B cell (primary cell): ENCODE measurements at regions of chr2 and their contacts with region 1.

Region 1: DNA sequence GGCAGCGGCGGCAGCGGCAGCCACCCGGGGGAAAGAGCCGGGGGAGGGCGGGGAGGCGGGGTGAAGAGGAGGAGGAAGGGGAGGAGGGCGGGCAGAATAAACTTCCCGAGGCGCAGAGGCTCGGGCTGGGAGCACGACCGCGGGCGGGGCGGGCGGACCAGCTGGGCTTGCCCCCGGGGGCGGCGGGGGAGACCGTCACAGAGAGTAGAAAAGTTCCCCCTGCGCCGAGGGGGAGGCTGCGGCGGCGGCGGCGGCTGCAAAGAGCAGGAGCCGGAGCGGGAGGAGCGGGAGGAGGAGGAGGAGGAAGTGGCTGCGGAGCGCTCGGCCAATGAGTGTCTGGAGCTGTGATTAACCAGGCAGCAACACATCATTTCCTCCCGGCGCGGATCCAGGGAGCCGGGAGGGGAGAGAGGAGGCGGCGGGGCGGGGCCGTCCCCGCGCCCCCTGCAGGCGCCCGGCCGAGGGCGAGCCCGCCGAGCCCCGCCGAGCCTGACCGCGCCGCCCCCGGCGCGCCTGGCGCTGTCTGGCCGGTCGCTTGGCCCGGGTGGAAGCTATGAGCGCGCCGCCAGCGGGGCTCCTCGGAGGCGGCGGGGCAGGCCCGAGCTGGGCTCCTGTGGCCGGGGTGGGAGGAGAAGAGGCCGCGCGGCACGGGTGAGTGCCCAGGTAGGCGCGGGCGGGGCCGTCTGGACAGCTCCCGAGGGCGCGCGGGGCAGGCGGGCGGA is at the start of gene ACVR1:
- DNase-seq: peak; percentile 85
- ATAC-seq: peak; percentile 77
- H3K4me3 ChIP-seq: peak within 1 kb of the TSS; percentile 56 to 81 (median 75)
- H3K4me3 Mint-ChIP-seq: peak within 1 kb of the TSS; percentile 95
- H3K27ac ChIP-seq: peak within 1 kb of the TSS; percentile 30 to 68
- H3K27ac Mint-ChIP-seq: peak within 1 kb of the TSS; percentile 91
- H3K4me1 ChIP-seq: peaks cover 14 to 20% of the 10 kb centered on the region in 2 donors
- H3K4me1 Mint-ChIP-seq: peaks cover 24% of the 10 kb centered on the region
- H3K27me3 ChIP-seq: no peaks in the 10 kb centered on the region
- H3K27me3 Mint-ChIP-seq: no peaks in the 10 kb centered on the region
- CTCF ChIP-seq: peak; percentile 45
- total RNA-seq, gene ACVR1: 11.3 and 11.7 TPM in 2 replicates

Region 2: DNA sequence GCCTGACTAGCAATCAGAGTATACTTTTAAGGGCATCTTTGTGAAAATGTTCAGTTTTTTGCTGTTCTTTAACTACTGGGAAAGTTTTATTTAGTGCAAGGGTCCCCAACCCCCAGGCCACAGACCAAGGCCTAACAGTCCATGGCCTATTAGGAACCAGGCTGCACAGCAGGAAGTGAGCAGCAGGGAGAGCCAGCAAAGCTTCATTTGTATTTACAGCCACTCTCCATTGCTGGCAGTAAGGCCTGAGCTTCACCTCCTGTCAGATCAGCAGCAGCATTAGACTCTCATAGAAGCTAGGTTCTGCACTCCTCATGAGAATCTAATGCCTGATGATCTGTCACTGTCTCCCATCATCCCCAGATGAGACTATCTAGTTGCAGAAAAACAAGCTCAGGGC is 1526.6 kb before region 1 on chr2:
- CTCF ChIA-PET with region 1: no interaction called
- POLR2A ChIA-PET with region 1: no interaction called
- intact Hi-C with region 1: loop called (anchors 5 kb)
- DNase-seq: no peak
- ATAC-seq: no peak
- H3K4me3 ChIP-seq: no peak overlapping the region
- H3K4me3 Mint-ChIP-seq: no peak overlapping the region
- H3K27ac ChIP-seq: no peak overlapping the region
- H3K27ac Mint-ChIP-seq: no peak overlapping the region
- H3K4me1 ChIP-seq: no peaks in the 10 kb centered on the region
- H3K4me1 Mint-ChIP-seq: no peaks in the 10 kb centered on the region
- H3K27me3 ChIP-seq: no peaks in the 10 kb centered on the region
- H3K27me3 Mint-ChIP-seq: no peaks in the 10 kb centered on the region
- CTCF ChIP-seq: no peak

Region 3: GRCh38 chr2:156435715-156436496 is 1440.3 kb before region 1 on chr2 and contains the start of gene GPD2:
- CTCF ChIA-PET with region 1: no interaction called
- POLR2A ChIA-PET with region 1: no interaction called
- intact Hi-C with region 1: loop called (anchors 5 kb)
- DNase-seq: peak; percentile 82
- ATAC-seq: peak; percentile 76
- H3K4me3 ChIP-seq: peak within 1 kb of the TSS; percentile 71 to 89 (median 74)
- H3K4me3 Mint-ChIP-seq: peak within 1 kb of the TSS; percentile 91
- H3K27ac ChIP-seq: peak within 1 kb of the TSS; percentile 62 to 85
- H3K27ac Mint-ChIP-seq: peak within 1 kb of the TSS; percentile 88
- H3K4me1 ChIP-seq: peaks cover 17 to 26% of the 10 kb centered on the region in 2 donors
- H3K4me1 Mint-ChIP-seq: peaks cover 34% of the 10 kb centered on the region
- H3K27me3 ChIP-seq: no peaks in the 10 kb centered on the region
- H3K27me3 Mint-ChIP-seq: no peaks in the 10 kb centered on the region
- CTCF ChIP-seq: no peak
- total RNA-seq, gene GPD2: 18.7 and 26.8 TPM in 2 replicates

Region 4: DNA sequence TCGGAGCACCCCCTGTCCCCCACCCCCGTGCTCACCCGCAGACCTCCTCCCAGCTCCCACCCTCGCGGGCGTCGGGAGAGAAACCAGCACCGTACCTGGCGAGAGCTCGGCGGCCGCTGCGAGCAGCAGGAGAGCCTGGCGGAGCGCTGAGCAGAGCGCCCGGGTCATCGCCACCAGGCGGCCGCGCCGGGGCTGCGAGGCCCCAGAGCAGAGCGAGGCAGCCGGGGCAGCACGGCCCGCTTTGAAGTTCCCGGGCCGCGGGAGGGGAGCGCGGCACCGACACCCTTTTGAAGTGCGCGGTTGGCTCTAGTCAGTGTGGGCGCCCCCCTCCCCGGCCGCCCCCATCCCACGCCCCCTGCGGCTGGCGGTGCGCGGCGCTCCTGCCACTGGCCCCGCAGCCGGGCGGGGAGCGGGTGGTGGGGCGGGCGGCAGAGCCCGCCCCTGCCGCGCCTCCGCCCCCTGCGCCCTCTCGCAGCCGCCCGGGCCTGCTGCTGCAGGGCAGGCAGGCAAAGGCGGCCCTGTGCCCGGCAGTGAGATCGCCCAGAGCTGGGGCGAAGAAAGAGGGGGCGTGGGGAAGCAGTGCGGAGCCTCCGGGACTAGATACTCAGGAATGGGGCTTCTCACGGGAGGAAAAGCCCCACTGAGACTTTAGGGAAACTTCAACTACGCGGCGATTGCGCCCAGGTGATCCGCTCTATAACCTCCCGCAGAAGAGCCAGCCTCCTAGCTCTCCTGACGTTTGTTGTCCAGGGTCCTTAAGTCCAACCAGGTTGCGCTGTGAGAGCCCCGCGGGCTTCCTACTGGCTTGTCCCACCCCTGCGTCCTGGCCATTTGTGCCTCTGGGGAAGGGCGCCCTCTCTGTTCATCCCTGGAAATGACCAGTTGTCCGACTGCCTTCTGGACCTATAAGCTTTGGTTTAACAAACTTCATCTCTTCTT is 247.5 kb before region 1 on chr2 and contains the start of gene ACVR1C:
- CTCF ChIA-PET with region 1: interaction called, 4 read pairs
- POLR2A ChIA-PET with region 1: no interaction called
- intact Hi-C with region 1: loop called (anchors 2 kb)
- DNase-seq: peak; percentile 70
- ATAC-seq: peak; percentile 85
- H3K4me3 ChIP-seq: peak within 1 kb of the TSS; percentile 34 to 68 (median 57)
- H3K4me3 Mint-ChIP-seq: peak within 1 kb of the TSS; percentile 85
- H3K27ac ChIP-seq: no peak within 1 kb of the TSS
- H3K27ac Mint-ChIP-seq: peak within 1 kb of the TSS; percentile 63
- H3K4me1 ChIP-seq: peaks cover 12 to 17% of the 10 kb centered on the region in 2 donors
- H3K4me1 Mint-ChIP-seq: peaks cover 23% of the 10 kb centered on the region
- H3K27me3 ChIP-seq: peaks cover 0 to 13% (median 2%) of the 10 kb centered on the region in 4 experiments
- H3K27me3 Mint-ChIP-seq: peaks cover 19% of the 10 kb centered on the region
- CTCF ChIP-seq: peak; percentile 44
- total RNA-seq, gene ACVR1C: 0.39 and 0.52 TPM in 2 replicates

Region 5: DNA sequence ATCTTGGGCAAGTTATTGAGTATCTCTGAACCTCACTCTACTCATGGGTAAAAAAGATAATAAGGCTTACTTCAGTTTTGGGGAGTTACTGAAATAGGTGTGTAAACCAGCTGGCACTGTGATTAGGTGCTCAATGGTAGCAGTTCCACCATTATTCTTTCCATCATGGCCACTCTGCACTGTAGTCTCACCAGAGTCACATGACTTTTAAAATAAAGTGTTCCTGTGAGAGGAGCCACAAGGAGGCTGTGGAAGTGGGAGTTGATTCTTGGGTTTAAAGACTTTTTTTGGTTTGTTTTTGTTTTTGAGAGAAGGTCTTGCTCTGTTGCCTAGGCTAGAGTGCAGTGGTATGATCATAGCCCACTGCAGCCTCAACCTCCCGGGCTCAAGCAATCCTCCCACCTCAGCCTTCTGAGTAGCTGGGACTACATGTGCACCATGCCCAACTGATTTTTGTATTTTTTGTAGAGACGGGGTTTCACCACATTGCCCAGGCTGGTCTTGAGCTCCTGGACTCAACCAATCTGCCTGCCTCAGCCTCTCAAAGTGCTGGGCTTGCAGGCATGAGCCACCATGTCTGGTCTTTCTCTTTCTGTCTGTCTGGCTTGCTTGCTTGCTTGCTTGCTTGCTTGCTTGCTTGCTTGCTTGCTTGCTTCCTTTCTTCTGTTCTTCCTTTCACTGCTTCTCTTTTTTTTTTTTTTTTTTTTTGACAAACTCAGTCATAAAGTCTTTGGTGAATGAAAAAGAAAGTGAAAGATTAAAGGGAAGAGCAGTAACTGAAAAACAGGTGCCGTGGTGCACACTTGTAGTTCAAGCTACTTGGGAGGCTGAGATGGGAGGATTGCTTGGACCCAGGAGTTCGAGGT is 21.1 kb after region 1 on chr2:
- CTCF ChIA-PET with region 1: interaction called, 7 read pairs
- POLR2A ChIA-PET with region 1: no interaction called
- intact Hi-C with region 1: loop called (anchors 1 kb)
- DNase-seq: peak; percentile 61
- ATAC-seq: peak; percentile 69
- H3K4me3 ChIP-seq: peak overlapping the region in 4 of 5 experiments; percentile 7 to 41 (median 30)
- H3K4me3 Mint-ChIP-seq: peak overlapping the region; percentile 76
- H3K27ac ChIP-seq: peak overlapping the region; percentile 53 to 54
- H3K27ac Mint-ChIP-seq: peak overlapping the region; percentile 91
- H3K4me1 ChIP-seq: peaks cover 22 to 31% of the 10 kb centered on the region in 2 donors
- H3K4me1 Mint-ChIP-seq: peaks cover 27% of the 10 kb centered on the region
- H3K27me3 ChIP-seq: no peaks in the 10 kb centered on the region
- H3K27me3 Mint-ChIP-seq: no peaks in the 10 kb centered on the region
- CTCF ChIP-seq: no peak

Region 6: GRCh38 chr2:158456309-158457066 is 580.3 kb after region 1 on chr2 and contains the starts of genes CCDC148 and PKP4:
- CTCF ChIA-PET with region 1: no interaction called
- POLR2A ChIA-PET with region 1: no interaction called
- intact Hi-C with region 1: loop called (anchors 5 kb)
- DNase-seq: peak; percentile 92
- ATAC-seq: peak; percentile 93
- H3K4me3 ChIP-seq: peak within 1 kb of the TSS; percentile 57 to 83 (median 69)
- H3K4me3 Mint-ChIP-seq: peak within 1 kb of the TSS; percentile 90
- H3K27ac ChIP-seq: peak within 1 kb of the TSS in 1 of 2 donors; percentile 7
- H3K27ac Mint-ChIP-seq: peak within 1 kb of the TSS; percentile 69
- H3K4me1 ChIP-seq: peaks cover 12 to 16% of the 10 kb centered on the region in 2 donors
- H3K4me1 Mint-ChIP-seq: peaks cover 17% of the 10 kb centered on the region
- H3K27me3 ChIP-seq: peaks cover 0 to 29% (median 9%) of the 10 kb centered on the region in 4 experiments
- H3K27me3 Mint-ChIP-seq: peaks cover 24% of the 10 kb centered on the region
- CTCF ChIP-seq: no peak
- total RNA-seq, gene CCDC148: 0.56 TPM in 1 of 2 replicates, not detected in the other
- total RNA-seq, gene PKP4: 13.3 and 13.5 TPM in 2 replicates

Region 7: GRCh38 chr2:158723917-158724690 is 847.9 kb after region 1 on chr2:
- CTCF ChIA-PET with region 1: no interaction called
- POLR2A ChIA-PET with region 1: no interaction called
- intact Hi-C with region 1: no loop called
- DNase-seq: no peak
- ATAC-seq: no peak
- H3K4me3 ChIP-seq: no peak overlapping the region
- H3K4me3 Mint-ChIP-seq: no peak overlapping the region
- H3K27ac ChIP-seq: no peak overlapping the region
- H3K27ac Mint-ChIP-seq: no peak overlapping the region
- H3K4me1 ChIP-seq: no peaks in the 10 kb centered on the region
- H3K4me1 Mint-ChIP-seq: no peaks in the 10 kb centered on the region
- H3K27me3 ChIP-seq: no peaks in the 10 kb centered on the region
- H3K27me3 Mint-ChIP-seq: peaks cover 4% of the 10 kb centered on the region
- CTCF ChIP-seq: no peak

Region 8: GRCh38 chr2:159286709-159287441 is 1410.6 kb after region 1 on chr2:
- CTCF ChIA-PET with region 1: no interaction called
- POLR2A ChIA-PET with region 1: no interaction called
- intact Hi-C with region 1: loop called (anchors 10 kb)
- DNase-seq: peak; percentile 98
- ATAC-seq: peak; percentile 99
- H3K4me3 ChIP-seq: peak overlapping the region; percentile 65 to 93 (median 85)
- H3K4me3 Mint-ChIP-seq: peak overlapping the region; percentile 95
- H3K27ac ChIP-seq: peak overlapping the region; percentile 78 to 87
- H3K27ac Mint-ChIP-seq: peak overlapping the region; percentile 90
- H3K4me1 ChIP-seq: peaks cover 20 to 26% of the 10 kb centered on the region in 2 donors
- H3K4me1 Mint-ChIP-seq: peaks cover 32% of the 10 kb centered on the region
- H3K27me3 ChIP-seq: no peaks in the 10 kb centered on the region
- H3K27me3 Mint-ChIP-seq: peaks cover 4% of the 10 kb centered on the region
- CTCF ChIP-seq: no peak